Astrocyte of the cerebellum (primary cell): ENCODE measurements at regions of chr12 and their contacts with region 1.

Region 1: DNA sequence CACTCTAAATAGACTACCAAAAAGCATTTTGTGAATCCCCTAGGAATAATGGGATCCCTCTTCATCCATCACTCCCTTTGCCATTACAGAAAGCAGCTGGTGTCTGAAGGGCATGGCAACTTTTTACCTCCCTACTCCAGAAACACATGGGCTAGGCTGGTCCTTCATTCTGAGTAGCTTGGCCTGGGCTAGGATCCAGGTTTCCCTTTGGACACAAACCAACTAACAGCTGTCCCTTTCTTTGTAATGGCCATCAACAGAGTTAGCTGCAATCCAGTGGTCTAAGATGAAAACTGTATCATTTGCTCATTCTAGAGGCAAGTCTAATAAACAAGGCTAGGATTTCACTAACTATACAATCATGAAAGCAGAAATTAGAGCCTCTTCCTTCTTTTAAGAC is 7.4 kb downstream of the GRIN2B start:
- DNase-seq: no peak
- H3K4me3 ChIP-seq: no peak overlapping the region
- CTCF ChIP-seq: no peak

Region 2: DNA sequence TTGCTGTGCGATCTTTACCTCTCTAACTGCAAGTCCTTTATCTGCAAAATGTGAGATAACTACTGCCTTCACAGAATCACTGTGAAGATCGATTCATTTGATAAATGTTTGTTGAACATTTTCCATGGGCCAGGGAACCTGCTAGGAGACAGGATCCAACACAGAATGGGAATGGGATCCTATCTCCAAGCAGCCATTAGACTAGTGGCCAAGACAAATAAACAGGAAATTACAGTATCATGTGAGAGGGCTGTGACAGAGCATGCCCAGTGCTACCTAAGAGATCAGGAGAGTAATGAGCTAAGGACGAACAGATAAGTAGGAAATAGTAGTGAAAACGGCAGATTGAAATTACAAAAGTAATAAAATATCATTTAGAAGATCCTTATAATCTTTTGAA is 98.3 kb before region 1 on chr12:
- in situ Hi-C with region 1: no loop called
- DNase-seq: no peak
- H3K4me3 ChIP-seq: no peak overlapping the region
- CTCF ChIP-seq: no peak

Region 3: GRCh38 chr12:13913371-13913770 is 60.6 kb before region 1 on chr12:
- in situ Hi-C with region 1: loop called (anchors 5 kb)
- DNase-seq: no peak
- H3K4me3 ChIP-seq: no peak overlapping the region
- CTCF ChIP-seq: no peak